ENCODE measurements at regions of chr3 and their contacts with region 1.

Region 1: GRCh38 chr3:17412950-17413530 is 329.4 kb downstream of the TBC1D5 start:
- DNase-seq: no peak
- ATAC-seq: peak; percentile 73 to 78
- H3K4me3 ChIP-seq: no peak overlapping the region
- H3K27ac ChIP-seq: no peak overlapping the region
- H3K4me1 ChIP-seq: peaks cover 0 to 12% of the 10 kb centered on the region in 2 donors
- H3K27me3 ChIP-seq: no peaks in the 10 kb centered on the region
- CTCF ChIP-seq: peak; percentile 49 to 82 (median 64)
- POLR2A ChIP-seq: no peak

Region 2: DNA sequence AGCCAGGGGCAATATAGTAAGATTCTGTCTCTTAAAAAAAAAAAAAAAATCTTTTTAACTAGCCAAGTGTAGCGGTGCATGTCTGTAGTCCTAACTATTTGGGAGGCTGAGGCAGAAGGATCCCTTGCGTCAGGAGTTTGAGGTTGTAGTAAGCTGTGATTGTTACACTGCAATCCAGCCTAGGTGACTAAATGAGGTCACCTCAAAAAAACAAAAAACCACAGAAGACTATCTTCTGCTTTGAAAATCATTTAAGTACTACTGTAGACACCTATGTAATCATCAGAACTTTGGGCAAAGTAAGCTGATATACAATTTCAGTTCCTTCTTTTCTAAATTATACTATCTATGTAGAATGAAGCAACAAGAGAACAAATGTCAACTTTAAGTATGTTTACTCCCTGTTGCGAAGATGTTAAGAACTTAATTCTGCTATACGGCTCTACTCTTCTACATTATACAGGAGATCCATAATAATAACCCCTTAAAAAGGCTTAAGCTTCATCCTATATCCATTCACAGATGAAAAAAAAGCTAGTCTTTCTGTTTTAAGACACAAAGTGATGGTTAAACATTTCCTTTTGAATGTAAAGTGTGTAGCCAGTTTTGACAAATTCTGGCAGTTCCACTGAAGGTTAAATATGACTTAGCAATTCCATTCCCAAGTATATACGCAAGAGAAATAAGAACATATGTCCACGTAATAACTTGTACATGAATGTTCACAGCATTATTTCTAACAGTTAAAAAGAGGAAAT is 823.0 kb before region 1 on chr3:
- in situ Hi-C with region 1: loop called in 2 of 4 experiments (anchors 10 to 25 kb)
- intact Hi-C with region 1: no loop called
- DNase-seq: no peak
- ATAC-seq: no peak
- H3K4me3 ChIP-seq: no peak overlapping the region
- H3K27ac ChIP-seq: no peak overlapping the region
- H3K4me1 ChIP-seq: no peaks in the 10 kb centered on the region
- H3K27me3 ChIP-seq: no peaks in the 10 kb centered on the region
- CTCF ChIP-seq: no peak
- POLR2A ChIP-seq: no peak

Region 3: GRCh38 chr3:16600780-16601539 is 812.1 kb before region 1 on chr3:
- in situ Hi-C with region 1: loop called (anchors 10 to 25 kb)
- intact Hi-C with region 1: loop called (anchors 5 kb)
- DNase-seq: peak; percentile 50 to 66
- ATAC-seq: peak; percentile 72 to 87
- H3K4me3 ChIP-seq: no peak overlapping the region
- H3K27ac ChIP-seq: no peak overlapping the region
- H3K4me1 ChIP-seq: peaks cover 0 to 5% of the 10 kb centered on the region in 2 donors
- H3K27me3 ChIP-seq: no peaks in the 10 kb centered on the region
- CTCF ChIP-seq: peak; percentile 79 to 92 (median 88)
- POLR2A ChIP-seq: no peak

Region 4: DNA sequence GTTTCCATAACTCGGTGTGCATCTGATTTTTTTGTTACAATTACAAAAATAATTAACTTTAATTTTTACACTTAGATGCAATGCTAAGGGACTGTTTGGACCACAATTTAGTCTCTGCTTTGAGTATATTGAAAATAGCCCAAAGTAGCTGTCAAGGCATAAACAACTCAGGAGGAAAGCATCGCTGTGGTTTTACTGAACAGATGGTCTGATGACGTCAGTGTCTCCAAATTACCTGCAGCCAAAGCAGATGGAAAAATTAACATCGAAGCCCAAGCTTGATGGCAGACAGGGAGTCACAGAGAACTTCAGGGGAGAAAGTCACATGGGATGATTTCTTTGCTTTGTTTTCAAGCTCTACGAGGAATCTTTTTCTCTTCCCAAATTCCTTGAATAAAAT is 611.3 kb before region 1 on chr3:
- in situ Hi-C with region 1: loop called in 1 of 4 experiments (anchors 25 kb)
- intact Hi-C with region 1: no loop called
- DNase-seq: no peak
- ATAC-seq: no peak
- H3K4me3 ChIP-seq: no peak overlapping the region
- H3K27ac ChIP-seq: no peak overlapping the region
- H3K4me1 ChIP-seq: peaks cover 13 to 19% of the 10 kb centered on the region in 2 donors
- H3K27me3 ChIP-seq: no peaks in the 10 kb centered on the region
- CTCF ChIP-seq: no peak
- POLR2A ChIP-seq: no peak

Region 5: DNA sequence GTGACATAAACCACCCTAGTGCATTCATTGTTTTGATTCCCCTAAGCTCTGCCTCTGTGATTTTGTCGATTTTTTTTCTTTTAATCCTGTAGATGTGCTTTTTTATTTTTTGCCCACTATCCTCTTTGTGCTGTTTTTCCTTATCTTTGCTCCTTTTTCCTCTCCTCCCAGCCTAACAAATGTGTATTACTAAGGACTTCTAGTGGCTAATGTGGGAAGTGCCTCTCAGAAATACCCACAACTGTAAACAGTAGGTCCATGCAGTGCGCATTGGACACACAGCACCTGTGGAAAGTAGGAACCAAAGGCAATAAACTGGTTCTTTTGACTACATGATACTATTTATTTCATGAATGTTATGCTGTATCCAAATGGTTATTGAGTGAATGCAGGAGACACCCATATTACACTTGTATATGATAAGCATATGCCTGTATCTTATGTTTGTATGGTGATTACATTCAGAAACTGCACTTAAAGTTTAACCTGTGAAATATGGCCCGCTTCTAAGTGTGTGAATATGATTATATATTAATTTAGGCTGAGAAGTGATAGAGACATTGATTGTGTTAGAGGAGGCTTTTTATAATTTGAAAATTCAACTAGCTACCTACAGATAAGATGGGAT is 380.5 kb before region 1 on chr3:
- in situ Hi-C with region 1: loop called in 1 of 4 experiments (anchors 25 kb)
- intact Hi-C with region 1: no loop called
- DNase-seq: no peak
- ATAC-seq: peak; percentile 61 to 65
- H3K4me3 ChIP-seq: no peak overlapping the region
- H3K27ac ChIP-seq: peak overlapping the region in 3 of 4 donors; percentile 3 to 48 (median 32)
- H3K4me1 ChIP-seq: peaks cover 15 to 16% of the 10 kb centered on the region in 2 donors
- H3K27me3 ChIP-seq: no peaks in the 10 kb centered on the region
- CTCF ChIP-seq: peak; percentile 56 to 76 (median 61)
- POLR2A ChIP-seq: no peak

Region 6: GRCh38 chr3:17258823-17259436 is 154.1 kb before region 1 on chr3:
- in situ Hi-C with region 1: loop called (anchors 5 to 25 kb)
- intact Hi-C with region 1: loop called (anchors 2 kb)
- DNase-seq: no peak
- ATAC-seq: no peak
- H3K4me3 ChIP-seq: no peak overlapping the region
- H3K27ac ChIP-seq: no peak overlapping the region
- H3K4me1 ChIP-seq: no peaks in the 10 kb centered on the region
- H3K27me3 ChIP-seq: no peaks in the 10 kb centered on the region
- CTCF ChIP-seq: peak; percentile 54 to 73 (median 60)
- POLR2A ChIP-seq: no peak

Region 7: DNA sequence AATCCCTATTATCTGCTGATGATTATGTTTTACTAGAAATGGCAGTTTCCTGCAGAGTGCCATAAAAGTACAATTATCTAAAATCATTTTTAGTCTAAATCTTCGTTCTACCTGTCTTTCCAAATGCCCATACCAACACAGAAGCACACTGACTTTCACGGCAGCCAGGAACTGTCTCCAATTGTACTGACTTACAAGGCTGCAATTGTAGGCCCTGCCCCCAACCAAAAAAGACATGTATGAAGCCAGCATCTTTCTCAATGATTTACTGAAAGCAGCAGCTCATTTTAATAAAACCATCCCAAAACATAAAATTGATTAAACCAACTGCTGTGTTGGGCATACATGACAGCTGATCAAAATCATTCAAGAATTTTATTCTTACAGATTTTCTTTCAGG is 210.4 kb after region 1 on chr3:
- in situ Hi-C with region 1: no loop called
- intact Hi-C with region 1: no loop called
- DNase-seq: no peak
- ATAC-seq: no peak
- H3K4me3 ChIP-seq: no peak overlapping the region
- H3K27ac ChIP-seq: no peak overlapping the region
- H3K4me1 ChIP-seq: no peaks in the 10 kb centered on the region
- H3K27me3 ChIP-seq: no peaks in the 10 kb centered on the region
- CTCF ChIP-seq: no peak
- POLR2A ChIP-seq: no peak

Measured in gastrocnemius medialis (tissue), 4 donors.